WTC11 (cell line): ENCODE measurements at regions of chr7 and their contacts with region 1.

Region 1: DNA sequence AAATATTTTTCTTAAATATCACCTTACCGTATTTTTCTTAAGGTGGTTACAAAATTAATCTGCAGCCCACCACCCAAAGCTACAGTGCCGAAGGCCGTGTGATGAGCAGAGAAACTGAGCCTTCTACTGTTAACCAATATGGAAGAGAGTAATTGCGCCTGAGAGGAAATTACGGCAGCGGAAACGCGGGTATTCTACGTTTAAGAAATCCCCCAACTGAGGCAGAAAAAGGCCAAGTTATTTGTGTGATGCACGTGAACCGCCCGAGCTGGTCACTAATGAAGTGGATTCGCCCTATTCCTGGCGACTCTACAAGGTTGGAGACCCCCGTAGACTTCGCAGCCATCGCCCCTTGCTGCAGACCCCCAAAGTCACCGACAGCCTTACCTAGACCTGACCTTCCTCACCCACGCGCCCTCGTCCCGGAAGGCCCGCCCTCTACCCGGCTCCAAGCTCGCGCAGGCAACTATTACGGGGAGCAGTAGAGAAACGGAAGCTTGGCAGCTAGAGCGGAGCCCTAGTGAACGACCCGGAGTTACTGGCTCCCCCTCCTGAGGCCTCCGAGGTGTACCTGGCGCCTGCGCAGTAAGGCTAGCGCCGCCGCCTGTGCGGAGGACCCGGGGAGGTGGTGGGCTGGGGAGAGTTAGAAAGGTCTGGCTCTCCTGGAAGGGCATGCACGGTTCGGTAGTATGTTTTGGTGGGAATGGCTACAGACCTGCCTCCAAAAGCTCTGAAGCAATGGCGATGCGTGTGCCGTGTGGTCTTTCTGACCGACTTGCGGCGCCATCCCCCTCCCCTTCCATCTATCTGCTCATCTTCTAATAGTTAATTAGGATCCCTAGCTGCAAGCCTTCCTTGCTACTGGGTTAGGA is at the start of gene MRPS33:
- DNase-seq: peak; percentile 96
- ATAC-seq: peak; percentile 99
- H3K4me3 Mint-ChIP-seq: peak within 1 kb of the TSS; percentile 96
- H3K27ac Mint-ChIP-seq: peak within 1 kb of the TSS; percentile 97
- H3K4me1 Mint-ChIP-seq: peaks cover 23% of the 10 kb centered on the region
- H3K27me3 Mint-ChIP-seq: peaks cover 7% of the 10 kb centered on the region
- CTCF ChIP-seq: no peak
- total RNA-seq, gene MRPS33: 63.5 to 66.8 TPM (median 66.7 TPM) in 3 replicates

Region 2: GRCh38 chr7:140810830-140811556 is 203.8 kb before region 1 on chr7:
- CTCF ChIA-PET with region 1: interaction called, 14 read pairs
- POLR2A ChIA-PET with region 1: no interaction called
- DNase-seq: peak; percentile 52
- ATAC-seq: peak; percentile 94
- H3K4me3 Mint-ChIP-seq: no peak overlapping the region
- H3K27ac Mint-ChIP-seq: no peak overlapping the region
- H3K4me1 Mint-ChIP-seq: no peaks in the 10 kb centered on the region; the same call in 1 of the 2 replicates
- H3K27me3 Mint-ChIP-seq: no peaks in the 10 kb centered on the region
- CTCF ChIP-seq: peak; percentile 25

Region 3: GRCh38 chr7:141072548-141073172 is 57.9 kb after region 1 on chr7:
- CTCF ChIA-PET with region 1: interaction called, 13 read pairs
- POLR2A ChIA-PET with region 1: interaction called, 12 read pairs
- DNase-seq: peak; percentile 55
- ATAC-seq: peak; percentile 10
- H3K4me3 Mint-ChIP-seq: peak overlapping the region; percentile 88
- H3K27ac Mint-ChIP-seq: no peak overlapping the region
- H3K4me1 Mint-ChIP-seq: peaks cover 24% of the 10 kb centered on the region
- H3K27me3 Mint-ChIP-seq: peaks cover 32% of the 10 kb centered on the region
- CTCF ChIP-seq: no peak

Region 4: DNA sequence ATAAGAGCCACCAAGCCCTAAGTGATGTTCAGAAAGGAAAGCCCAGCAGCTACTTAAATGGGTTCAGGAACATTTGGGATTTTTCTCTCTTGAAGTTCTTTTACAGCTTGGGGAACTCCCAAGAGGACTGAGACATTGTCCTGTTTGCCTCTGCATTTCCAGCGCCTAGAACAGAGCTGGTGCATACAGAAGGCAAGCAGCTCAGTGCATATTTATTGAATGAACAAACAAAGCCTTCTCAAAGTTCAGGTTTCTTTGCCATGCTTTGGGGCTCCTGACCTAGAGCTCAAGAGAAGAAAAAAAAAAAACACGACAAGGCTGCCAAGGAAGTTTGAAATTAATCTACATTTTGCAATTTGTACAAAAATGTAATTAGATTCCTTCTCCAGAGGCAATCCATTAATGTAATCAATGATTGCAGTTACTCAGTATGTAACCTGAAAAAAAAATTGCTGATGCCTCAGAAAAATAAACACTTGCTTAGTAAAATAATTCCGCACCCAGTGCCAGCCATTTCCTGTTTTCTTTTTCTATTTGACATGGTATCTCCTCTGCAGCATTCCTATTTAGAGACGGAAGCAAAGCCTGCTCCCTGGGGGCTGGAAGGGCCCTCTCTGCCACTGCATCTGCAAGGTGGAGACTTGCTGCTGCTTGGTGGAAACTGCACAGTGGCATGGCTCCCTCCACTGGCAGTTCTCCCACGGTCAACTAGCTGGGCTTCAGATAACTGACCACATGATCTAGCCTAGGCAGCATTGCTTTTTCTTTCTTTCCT is 216.4 kb after region 1 on chr7:
- CTCF ChIA-PET with region 1: interaction called, 11 read pairs
- POLR2A ChIA-PET with region 1: no interaction called
- DNase-seq: peak; percentile 58
- ATAC-seq: peak; percentile 88
- H3K4me3 Mint-ChIP-seq: no peak overlapping the region
- H3K27ac Mint-ChIP-seq: no peak overlapping the region
- H3K4me1 Mint-ChIP-seq: peaks cover 52% of the 10 kb centered on the region
- H3K27me3 Mint-ChIP-seq: no peaks in the 10 kb centered on the region
- CTCF ChIP-seq: no peak